ENCODE measurements at regions of chr11 and their contacts with region 1.

Region 1: GRCh38 chr11:110373051-110373702 is 56.6 kb upstream of the FDX1 start:
- DNase-seq: peak; percentile 67
- CTCF ChIP-seq: no peak

Region 2: DNA sequence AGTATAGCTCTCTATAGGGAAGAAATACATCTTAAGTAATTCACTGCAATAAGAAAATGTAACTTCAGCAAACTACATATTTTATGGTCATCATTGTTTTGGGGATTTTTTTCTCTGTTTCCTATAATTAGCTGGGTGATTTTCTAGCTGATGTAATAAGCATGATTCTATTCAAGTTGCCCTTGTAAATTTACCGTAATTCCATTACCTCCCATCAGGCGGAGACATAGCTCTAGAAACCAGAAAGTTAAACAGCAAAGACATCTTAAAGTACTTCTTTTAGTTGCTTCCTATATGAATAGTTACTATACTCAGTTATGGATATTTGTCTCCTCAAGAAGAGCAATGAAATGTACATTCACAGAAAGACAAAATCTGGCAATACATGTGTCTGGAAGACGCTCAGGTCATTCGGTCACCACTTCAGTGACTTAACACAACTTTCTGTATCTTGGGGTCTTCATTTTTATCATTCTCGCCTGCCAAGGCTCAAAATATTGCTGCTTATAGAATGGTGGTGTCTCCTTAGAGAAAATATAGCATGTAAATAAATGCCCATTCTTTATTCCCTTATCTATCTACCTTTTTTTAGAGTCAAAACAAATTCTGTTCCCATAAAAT is 519.9 kb before region 1 on chr11:
- in situ Hi-C with region 1: loop called (anchors 25 kb)
- DNase-seq: peak; percentile 22
- CTCF ChIP-seq: peak; percentile 61

Region 3: DNA sequence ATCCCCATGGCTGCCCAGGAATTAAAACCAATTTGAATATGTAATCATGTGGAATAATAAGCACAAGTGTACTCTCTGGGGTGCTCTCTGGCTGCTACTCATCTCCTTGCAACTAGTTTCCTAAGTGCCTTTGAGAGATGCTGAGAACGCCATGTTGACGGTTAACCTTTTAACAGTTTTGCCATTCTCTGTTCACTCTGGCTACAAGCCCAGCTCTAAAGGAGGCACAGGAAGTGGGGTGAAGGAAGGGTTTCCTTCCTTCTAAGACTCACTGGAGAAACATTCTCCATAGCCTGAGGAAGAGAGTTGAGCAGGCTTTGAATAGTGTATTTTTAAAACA is 402.0 kb before region 1 on chr11:
- in situ Hi-C with region 1: loop called (anchors 25 kb)
- DNase-seq: no peak
- CTCF ChIP-seq: no peak

Region 4: GRCh38 chr11:110200241-110200640 is 172.9 kb before region 1 on chr11:
- in situ Hi-C with region 1: loop called (anchors 5 kb)
- DNase-seq: no peak
- CTCF ChIP-seq: no peak

Region 5: DNA sequence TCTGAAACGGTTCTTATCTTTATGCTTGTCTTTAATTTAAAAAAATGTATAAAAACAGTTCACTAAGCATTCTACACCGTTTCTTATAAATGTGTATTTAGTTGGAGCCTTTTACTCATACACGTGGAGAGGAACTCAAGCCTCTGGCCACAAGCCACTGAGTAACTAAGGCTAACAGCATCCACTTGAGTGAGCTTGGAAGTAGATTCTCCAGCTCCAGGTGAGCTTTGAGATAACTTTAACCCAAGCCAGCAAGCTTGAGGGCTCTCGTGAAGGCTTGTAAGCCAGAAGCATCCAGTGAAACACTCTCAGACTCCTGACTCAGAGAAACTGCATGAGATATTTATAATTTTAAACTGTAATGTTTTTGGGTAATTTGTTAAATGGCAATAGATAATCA is 256.4 kb after region 1 on chr11:
- in situ Hi-C with region 1: no loop called
- DNase-seq: no peak
- CTCF ChIP-seq: no peak